AG04449 (cell line): ENCODE measurements at regions of chr7 and their contacts with region 1.

Region 1: GRCh38 chr7:150356265-150356897 is 12.2 kb upstream of the REPIN1 start:
- DNase-seq: no peak
- H3K4me3 ChIP-seq: no peak overlapping the region
- CTCF ChIP-seq: peak; percentile 49

Region 2: DNA sequence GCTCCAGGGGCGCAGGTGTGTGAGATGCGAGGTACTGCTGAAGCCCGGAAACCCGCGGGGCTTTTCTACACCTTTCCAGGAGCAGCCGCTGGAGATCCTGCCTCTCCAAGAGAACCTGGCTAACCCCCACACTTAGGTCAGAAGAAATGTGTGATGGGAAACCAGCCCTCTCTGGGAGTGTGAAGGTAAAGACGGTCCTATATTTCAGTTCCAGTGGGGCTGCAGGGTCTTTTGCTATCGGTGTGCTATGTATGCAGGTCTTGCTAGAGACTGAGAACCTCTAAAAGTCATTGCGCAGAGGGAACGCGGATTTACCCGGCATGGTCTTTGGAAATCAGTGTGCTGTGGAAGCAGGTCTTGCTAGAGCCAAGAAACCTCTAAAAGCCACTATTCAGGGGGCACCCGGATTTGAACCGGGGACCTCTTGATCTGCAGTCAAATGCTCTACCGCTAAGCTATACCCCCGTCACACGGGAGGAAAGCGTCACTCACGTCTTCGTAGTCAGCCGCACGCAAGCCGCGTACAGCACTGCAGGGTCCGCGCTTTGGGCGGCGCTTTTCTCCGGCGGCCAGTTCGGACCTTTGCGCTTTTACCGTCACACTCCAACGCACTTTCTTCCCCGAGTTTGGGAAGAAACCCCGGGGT is 941.5 kb before region 1 on chr7:
- CTCF ChIA-PET with region 1: no interaction called
- POLR2A ChIA-PET with region 1: no interaction called
- DNase-seq: peak; percentile 44
- H3K4me3 ChIP-seq: peak overlapping the region; percentile 25
- CTCF ChIP-seq: no peak

Region 3: GRCh38 chr7:150396426-150397375 is 40.3 kb after region 1 on chr7:
- CTCF ChIA-PET with region 1: no interaction called
- POLR2A ChIA-PET with region 1: no interaction called
- DNase-seq: no peak
- H3K4me3 ChIP-seq: no peak overlapping the region
- CTCF ChIP-seq: no peak

Region 4: DNA sequence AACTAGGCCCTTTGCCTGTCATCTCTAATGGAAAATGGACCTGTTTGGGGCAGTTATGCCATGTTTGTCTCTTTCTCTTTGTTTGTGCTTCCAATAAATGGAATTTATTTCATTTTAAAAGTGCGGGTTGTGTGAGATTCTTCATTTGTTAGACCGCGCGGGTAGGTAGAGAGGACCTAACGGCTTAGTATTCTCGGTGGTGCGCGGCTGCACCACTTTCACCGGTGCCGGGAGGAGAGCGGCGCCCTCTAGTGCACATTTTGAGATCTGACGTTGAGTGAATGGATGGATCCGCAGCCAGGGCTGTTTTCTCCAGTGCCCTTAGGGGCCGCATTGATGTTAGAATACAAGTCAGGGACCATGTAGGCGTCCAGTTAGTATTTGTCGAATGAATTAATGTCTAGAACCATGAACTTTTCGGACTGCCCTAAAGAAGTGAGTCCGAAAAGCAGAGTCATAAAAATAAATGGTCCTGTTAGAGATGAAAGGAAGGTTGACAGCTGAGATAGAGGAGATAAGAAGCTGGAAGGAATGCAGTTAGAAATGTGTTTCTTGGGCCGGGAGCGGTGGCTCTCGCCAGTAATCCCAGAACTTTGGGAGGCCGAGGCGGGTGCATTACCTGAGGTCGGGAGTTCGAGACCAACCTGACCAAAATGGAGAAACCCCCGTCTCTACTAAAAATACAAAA is 64.8 kb after region 1 on chr7:
- CTCF ChIA-PET with region 1: interaction called, 21 read pairs
- POLR2A ChIA-PET with region 1: no interaction called
- DNase-seq: no peak
- H3K4me3 ChIP-seq: no peak overlapping the region
- CTCF ChIP-seq: peak; percentile 91